Posterior vena cava (tissue), 2 donors: ENCODE measurements at regions of chr12 and their contacts with region 1.

Region 1: GRCh38 chr12:113961921-113962710 is 4.0 kb downstream of the RBM19 start:
- DNase-seq: no peak

Region 2: GRCh38 chr12:113896194-113896593 is 65.9 kb before region 1 on chr12:
- intact Hi-C with region 1: loop called in 1 of 2 experiments (anchors 2 kb)
- DNase-seq: no peak